CD8-positive, alpha-beta memory T cell (primary cell): ENCODE measurements at regions of chr19 and their contacts with region 1.

Region 1: GRCh38 chr19:19821366-19821951 is at the start of gene ZNF506:
- DNase-seq: peak; percentile 96 to 99 (median 97)
- H3K4me3 ChIP-seq: peak within 1 kb of the TSS; percentile 95
- H3K4me3 Mint-ChIP-seq: peak within 1 kb of the TSS; percentile 96 to 100 (median 100)
- H3K27ac ChIP-seq: peak within 1 kb of the TSS; percentile 96
- H3K27ac Mint-ChIP-seq: peak within 1 kb of the TSS; percentile 99 to 100 (median 100)
- H3K4me1 ChIP-seq: peaks cover 35% of the 10 kb centered on the region
- H3K4me1 Mint-ChIP-seq: peaks cover 43 to 50% (median 49%) of the 10 kb centered on the region in 3 donors
- H3K27me3 ChIP-seq: no peaks in the 10 kb centered on the region
- H3K27me3 Mint-ChIP-seq: peaks cover 0 to 2% of the 10 kb centered on the region in 2 donors
- total RNA-seq, gene ZNF506: 27.8 to 28.3 TPM

Region 2: DNA sequence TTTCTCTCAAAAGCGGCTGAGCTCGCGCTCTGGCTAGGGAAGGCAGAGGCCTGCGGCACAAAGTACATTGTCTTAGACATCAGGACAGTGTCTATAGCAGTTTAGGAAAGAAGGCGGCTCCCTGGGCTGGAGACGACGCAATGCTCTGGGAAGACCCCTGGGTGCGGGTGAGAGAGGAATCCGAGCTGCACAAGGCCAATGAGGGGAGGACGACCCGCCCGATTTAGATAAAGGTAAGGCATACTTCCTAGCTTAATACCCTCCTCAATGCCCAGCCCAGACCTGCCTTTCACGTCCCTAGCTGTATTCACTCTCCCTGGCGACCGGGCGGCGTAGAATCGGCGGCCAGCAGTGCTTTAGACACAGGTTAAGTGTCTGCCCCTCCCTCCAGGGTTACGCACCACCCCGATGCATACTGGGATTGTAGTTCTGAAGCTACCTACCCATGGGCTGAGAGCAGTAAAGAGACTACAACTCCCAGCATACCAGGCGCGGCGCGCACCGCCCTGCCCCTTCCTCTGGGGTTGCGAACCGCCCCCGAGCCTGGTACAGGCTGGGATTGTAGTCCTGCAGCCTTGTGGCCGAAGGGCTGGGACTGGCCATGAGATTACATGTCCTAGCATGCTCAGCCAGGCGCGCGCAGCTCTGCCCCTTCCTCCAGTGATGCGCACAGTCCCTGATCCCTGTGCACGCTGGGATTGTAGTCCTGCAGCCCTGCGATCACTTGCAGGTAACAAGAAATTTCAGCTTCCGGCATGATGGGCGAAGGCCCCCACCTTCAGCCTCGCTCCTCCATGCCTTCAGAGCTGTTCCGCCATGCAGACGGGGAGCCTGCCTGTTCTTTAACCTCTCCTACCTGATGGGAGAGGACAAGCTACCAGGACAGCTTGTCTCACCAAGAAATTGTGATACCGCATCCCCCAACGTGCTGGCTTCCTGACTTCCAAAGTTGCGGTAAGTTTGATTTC is 45.1 kb before region 1 on chr19:
- CTCF ChIA-PET with region 1: interaction called, 7 read pairs
- POLR2A ChIA-PET with region 1: interaction called, 16 read pairs
- DNase-seq: peak; percentile 85 to 92 (median 88)
- H3K4me3 ChIP-seq: peak overlapping the region; percentile 99
- H3K4me3 Mint-ChIP-seq: peak overlapping the region; percentile 90 to 100 (median 98)
- H3K27ac ChIP-seq: peak overlapping the region; percentile 70
- H3K27ac Mint-ChIP-seq: peak overlapping the region; percentile 76 to 99 (median 98)
- H3K4me1 ChIP-seq: peaks cover 24% of the 10 kb centered on the region
- H3K4me1 Mint-ChIP-seq: peaks cover 51 to 71% (median 54%) of the 10 kb centered on the region in 3 donors
- H3K27me3 ChIP-seq: no peaks in the 10 kb centered on the region
- H3K27me3 Mint-ChIP-seq: no peaks in the 10 kb centered on the region

Region 3: DNA sequence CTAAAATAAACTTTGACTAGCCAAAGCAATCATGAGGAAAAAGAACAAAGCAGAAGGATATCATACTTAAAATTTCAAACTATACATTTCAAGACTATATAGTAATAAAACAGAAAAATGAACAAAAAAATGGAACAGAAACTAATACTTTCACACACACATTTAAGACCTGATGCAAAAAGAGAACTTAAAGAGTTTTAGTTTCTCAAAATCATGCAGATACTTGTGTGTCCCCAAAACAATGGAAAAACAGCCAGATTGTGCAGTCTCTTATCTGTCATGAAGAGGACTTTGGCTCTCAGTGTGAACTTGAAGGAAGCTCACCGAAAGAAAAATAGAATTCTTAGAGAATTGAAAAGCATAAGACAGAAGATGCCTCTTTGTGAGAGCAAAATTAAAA is 16.0 kb before region 1 on chr19:
- CTCF ChIA-PET with region 1: interaction called, 6 read pairs
- POLR2A ChIA-PET with region 1: interaction called, 10 read pairs
- DNase-seq: no peak
- H3K4me3 ChIP-seq: no peak overlapping the region
- H3K4me3 Mint-ChIP-seq: no peak overlapping the region
- H3K27ac ChIP-seq: no peak overlapping the region
- H3K27ac Mint-ChIP-seq: peak overlapping the region in 6 of 8 donors; percentile 25 to 87 (median 49)
- H3K4me1 ChIP-seq: no peaks in the 10 kb centered on the region
- H3K4me1 Mint-ChIP-seq: peaks cover 36 to 53% (median 43%) of the 10 kb centered on the region in 3 donors
- H3K27me3 ChIP-seq: no peaks in the 10 kb centered on the region
- H3K27me3 Mint-ChIP-seq: no peaks in the 10 kb centered on the region

Region 4: DNA sequence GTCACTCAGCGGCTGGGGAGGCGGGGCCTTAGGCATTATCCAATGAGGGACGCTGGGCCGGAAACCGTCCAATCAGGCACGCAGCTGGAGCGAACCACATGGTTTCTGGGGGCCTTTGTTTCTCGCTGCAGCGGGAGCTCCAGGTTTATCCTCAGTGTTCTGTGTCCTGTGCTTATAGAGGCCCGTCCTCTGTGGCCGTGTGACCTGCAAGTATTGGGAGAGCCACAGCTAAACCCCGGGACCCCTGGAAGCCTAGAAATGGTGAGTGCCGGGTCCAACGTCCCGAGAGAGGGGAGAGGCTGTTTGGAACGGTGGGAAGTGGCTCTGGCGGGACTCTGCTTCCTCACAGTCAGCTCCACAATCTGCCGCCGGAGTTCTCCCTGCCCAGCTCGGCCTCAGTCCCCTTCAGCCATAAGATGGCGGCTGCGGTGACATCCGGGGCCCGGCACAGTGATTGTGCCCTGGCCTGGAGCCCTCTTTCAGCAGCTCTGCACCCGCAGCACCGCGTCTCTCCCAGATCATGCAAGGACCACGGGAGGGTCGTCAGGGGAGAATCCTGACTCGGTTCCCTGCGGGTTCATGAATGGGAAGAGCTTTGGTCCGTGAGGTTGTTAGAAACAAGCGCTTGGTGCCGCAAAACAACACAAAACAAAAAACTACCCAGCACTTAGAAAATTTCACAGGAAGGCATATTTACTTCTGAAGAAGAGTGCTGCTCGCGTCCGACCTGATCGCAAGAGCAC is 44.5 kb after region 1 on chr19 and contains the start of gene ZNF253:
- CTCF ChIA-PET with region 1: interaction called, 7 read pairs
- POLR2A ChIA-PET with region 1: interaction called, 59 read pairs
- DNase-seq: peak; percentile 89 to 95 (median 92)
- H3K4me3 ChIP-seq: peak within 1 kb of the TSS; percentile 98
- H3K4me3 Mint-ChIP-seq: peak within 1 kb of the TSS; percentile 98 to 100 (median 100)
- H3K27ac ChIP-seq: peak within 1 kb of the TSS; percentile 91
- H3K27ac Mint-ChIP-seq: peak within 1 kb of the TSS; percentile 90 to 99 (median 98)
- H3K4me1 ChIP-seq: peaks cover 18% of the 10 kb centered on the region
- H3K4me1 Mint-ChIP-seq: peaks cover 33 to 35% (median 33%) of the 10 kb centered on the region in 3 donors
- H3K27me3 ChIP-seq: no peaks in the 10 kb centered on the region
- H3K27me3 Mint-ChIP-seq: no peaks in the 10 kb centered on the region
- total RNA-seq, gene ZNF253: 14.0 to 16.1 TPM

Region 5: GRCh38 chr19:19900729-19901444 is 79.4 kb after region 1 on chr19 and contains the start of gene ZNF93:
- CTCF ChIA-PET with region 1: no interaction called
- POLR2A ChIA-PET with region 1: interaction called, 14 read pairs
- DNase-seq: peak; percentile 80 to 93 (median 88)
- H3K4me3 ChIP-seq: peak within 1 kb of the TSS; percentile 91
- H3K4me3 Mint-ChIP-seq: peak within 1 kb of the TSS; percentile 90 to 99 (median 95)
- H3K27ac ChIP-seq: peak within 1 kb of the TSS; percentile 71
- H3K27ac Mint-ChIP-seq: peak within 1 kb of the TSS; percentile 45 to 96 (median 93)
- H3K4me1 ChIP-seq: peaks cover 8% of the 10 kb centered on the region
- H3K4me1 Mint-ChIP-seq: peaks cover 23 to 44% (median 32%) of the 10 kb centered on the region in 3 donors
- H3K27me3 ChIP-seq: no peaks in the 10 kb centered on the region
- H3K27me3 Mint-ChIP-seq: no peaks in the 10 kb centered on the region
- total RNA-seq, gene ZNF93: 8.6 to 9.1 TPM

Region 6: GRCh38 chr19:20005766-20006165 is 184.3 kb after region 1 on chr19:
- CTCF ChIA-PET with region 1: no interaction called
- POLR2A ChIA-PET with region 1: no interaction called
- DNase-seq: no peak
- H3K4me3 ChIP-seq: no peak overlapping the region
- H3K4me3 Mint-ChIP-seq: no peak overlapping the region
- H3K27ac ChIP-seq: no peak overlapping the region
- H3K27ac Mint-ChIP-seq: no peak overlapping the region
- H3K4me1 ChIP-seq: no peaks in the 10 kb centered on the region
- H3K4me1 Mint-ChIP-seq: peaks cover 0 to 4% (median 0%) of the 10 kb centered on the region in 3 donors
- H3K27me3 ChIP-seq: no peaks in the 10 kb centered on the region
- H3K27me3 Mint-ChIP-seq: no peaks in the 10 kb centered on the region